ENCODE measurements at regions of chr11 and their contacts with region 1.

Region 1: GRCh38 chr11:47407746-47408590 is at the start of gene SLC39A13:
- DNase-seq: peak; percentile 88 to 94 (median 90)
- H3K4me3 ChIP-seq: peak within 1 kb of the TSS; percentile 34 to 73
- H3K4me3 Mint-ChIP-seq: peak within 1 kb of the TSS; percentile 89 to 97 (median 92)
- H3K27ac ChIP-seq: peak within 1 kb of the TSS; percentile 80
- H3K27ac Mint-ChIP-seq: peak within 1 kb of the TSS; percentile 92 to 97 (median 94)
- H3K4me1 ChIP-seq: peaks cover 25% of the 10 kb centered on the region
- H3K4me1 Mint-ChIP-seq: peaks cover 10 to 27% (median 20%) of the 10 kb centered on the region in 4 donors
- H3K27me3 ChIP-seq: no peaks in the 10 kb centered on the region
- H3K27me3 Mint-ChIP-seq: no peaks in the 10 kb centered on the region
- total RNA-seq, gene SLC39A13: 63.6 to 68.3 TPM

Region 2: DNA sequence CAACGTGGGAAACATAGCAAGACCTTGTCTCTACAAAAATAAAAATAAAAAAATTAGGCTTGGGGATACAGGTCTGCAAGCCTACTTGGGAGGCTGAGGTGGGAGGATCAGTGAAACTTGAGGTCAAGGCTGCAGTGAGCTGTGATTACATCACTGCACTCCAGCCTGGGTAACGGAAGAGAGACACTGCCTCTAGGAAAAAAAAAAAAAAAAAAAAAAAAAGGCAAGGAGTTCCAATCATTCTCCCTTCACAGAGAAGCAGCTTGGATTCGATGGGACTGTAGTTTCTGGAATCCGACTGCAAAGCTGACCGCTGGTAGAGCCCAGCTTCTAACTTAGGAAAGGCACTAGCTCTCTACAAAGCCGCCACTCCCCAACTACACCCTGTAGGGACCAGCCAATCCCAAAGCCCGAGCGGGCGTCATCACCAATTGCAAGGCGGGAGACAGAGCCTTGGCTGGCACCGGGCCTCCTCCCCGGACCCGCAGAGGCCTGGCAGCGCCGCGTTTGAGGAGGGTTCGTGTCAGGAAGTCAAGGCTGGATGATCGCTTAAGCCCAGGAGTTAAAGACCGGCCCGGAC is 193.9 kb before region 1 on chr11:
- CTCF ChIA-PET with region 1: no interaction called
- POLR2A ChIA-PET with region 1: interaction called, 6 read pairs
- intact Hi-C with region 1: loop called (anchors 1 kb)
- DNase-seq: peak; percentile 79 to 88 (median 80)
- H3K4me3 ChIP-seq: peak overlapping the region; percentile 57 to 95
- H3K4me3 Mint-ChIP-seq: peak overlapping the region; percentile 99 to 100 (median 99)
- H3K27ac ChIP-seq: peak overlapping the region; percentile 81
- H3K27ac Mint-ChIP-seq: peak overlapping the region; percentile 98 to 100 (median 99)
- H3K4me1 ChIP-seq: peaks cover 37% of the 10 kb centered on the region
- H3K4me1 Mint-ChIP-seq: peaks cover 23 to 39% (median 28%) of the 10 kb centered on the region in 4 donors
- H3K27me3 ChIP-seq: no peaks in the 10 kb centered on the region
- H3K27me3 Mint-ChIP-seq: no peaks in the 10 kb centered on the region

Region 3: GRCh38 chr11:47317064-47317828 is 90.7 kb before region 1 on chr11:
- CTCF ChIA-PET with region 1: interaction called, 12 read pairs
- POLR2A ChIA-PET with region 1: no interaction called
- intact Hi-C with region 1: no loop called
- DNase-seq: no peak
- H3K4me3 ChIP-seq: no peak overlapping the region
- H3K4me3 Mint-ChIP-seq: no peak overlapping the region
- H3K27ac ChIP-seq: no peak overlapping the region
- H3K27ac Mint-ChIP-seq: peak overlapping the region in 5 of 7 donors; percentile 12 to 82 (median 24)
- H3K4me1 ChIP-seq: no peaks in the 10 kb centered on the region
- H3K4me1 Mint-ChIP-seq: peaks cover 0 to 4% (median 0%) of the 10 kb centered on the region in 4 donors
- H3K27me3 ChIP-seq: no peaks in the 10 kb centered on the region
- H3K27me3 Mint-ChIP-seq: no peaks in the 10 kb centered on the region

Region 4: DNA sequence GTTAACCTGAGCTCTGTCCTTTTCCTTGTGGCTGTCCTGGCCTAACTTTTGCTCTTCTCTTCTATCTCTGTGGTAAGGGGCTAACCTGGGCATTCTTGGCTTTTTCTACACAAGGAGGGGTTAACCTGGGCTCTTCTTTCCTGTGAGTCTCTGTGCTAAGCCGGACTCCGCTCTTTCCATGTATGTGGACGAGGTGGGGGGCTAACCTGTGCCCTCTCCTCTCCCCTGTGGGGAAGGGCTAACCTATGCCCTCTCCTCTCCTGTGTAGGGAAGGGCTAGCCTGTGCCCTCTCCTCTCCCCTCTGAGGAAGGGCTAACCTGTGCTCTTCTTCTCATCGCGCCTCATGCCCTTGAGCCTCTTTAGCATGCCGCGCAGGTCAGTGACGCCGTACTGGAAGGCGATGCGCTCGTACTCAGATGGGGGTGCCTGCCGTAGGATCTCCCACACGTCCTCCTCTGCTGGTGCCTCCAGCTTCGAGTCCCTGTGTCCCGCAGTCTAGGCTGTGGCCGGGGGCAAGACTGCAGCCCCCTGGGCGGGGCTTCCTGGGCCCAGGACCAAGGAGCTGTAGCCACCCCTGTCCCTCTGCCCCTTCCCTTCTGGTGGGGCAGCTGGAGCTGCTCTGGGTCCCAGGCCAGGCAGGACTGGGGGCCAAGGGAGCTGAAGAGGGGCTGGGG is 61.9 kb before region 1 on chr11:
- CTCF ChIA-PET with region 1: no interaction called
- POLR2A ChIA-PET with region 1: no interaction called
- intact Hi-C with region 1: no loop called
- DNase-seq: no peak
- H3K4me3 ChIP-seq: no peak overlapping the region
- H3K4me3 Mint-ChIP-seq: no peak overlapping the region
- H3K27ac ChIP-seq: no peak overlapping the region
- H3K27ac Mint-ChIP-seq: no peak overlapping the region
- H3K4me1 ChIP-seq: no peaks in the 10 kb centered on the region
- H3K4me1 Mint-ChIP-seq: peaks cover 0 to 2% (median 0%) of the 10 kb centered on the region in 4 donors
- H3K27me3 ChIP-seq: no peaks in the 10 kb centered on the region
- H3K27me3 Mint-ChIP-seq: no peaks in the 10 kb centered on the region

Region 5: DNA sequence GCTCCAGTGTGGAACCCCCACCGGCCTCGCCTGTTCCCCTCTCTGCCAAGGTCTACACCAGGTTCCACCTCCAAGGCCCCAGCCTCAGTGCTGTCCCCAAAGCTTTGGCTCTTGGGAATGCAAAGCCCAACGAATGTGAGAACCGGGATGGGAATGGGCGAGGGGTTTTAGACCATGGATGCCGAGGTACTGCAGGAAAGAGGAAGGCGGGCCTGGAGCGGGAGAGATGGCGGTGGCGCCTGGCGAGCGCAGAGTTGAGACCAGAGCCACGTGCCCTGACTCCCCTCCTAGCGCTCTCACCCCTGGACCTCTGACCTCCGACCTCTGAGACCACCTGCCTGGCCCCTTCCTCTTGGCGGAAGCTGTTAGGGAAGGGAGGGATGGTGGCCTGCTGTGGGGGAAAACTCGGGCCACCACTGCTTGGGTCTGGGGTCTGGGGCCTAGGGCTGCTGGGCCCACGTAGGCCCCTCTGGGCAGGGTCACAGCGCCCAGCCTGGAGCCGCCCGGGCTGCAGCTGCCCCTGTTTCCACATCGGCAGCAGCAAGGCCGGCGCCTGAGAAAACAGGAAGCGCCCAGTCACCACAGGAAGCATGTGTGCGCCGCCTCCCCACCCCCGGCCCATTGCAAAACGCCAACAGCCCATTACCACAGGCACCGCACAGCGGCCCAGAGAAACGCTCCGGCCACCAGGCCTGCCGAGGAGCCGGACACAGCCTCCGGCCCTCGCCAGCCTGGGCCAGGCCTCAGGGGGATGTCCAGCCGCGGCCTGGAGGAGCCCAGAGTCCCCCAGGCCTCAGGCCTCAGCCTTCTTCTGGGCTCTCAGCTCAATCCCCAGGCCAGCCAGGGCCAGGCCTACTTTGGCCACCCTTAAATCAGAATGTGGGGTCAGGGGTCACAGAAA is 13.4 kb before region 1 on chr11:
- CTCF ChIA-PET with region 1: interaction called, 70 read pairs
- POLR2A ChIA-PET with region 1: interaction called, 86 read pairs
- intact Hi-C with region 1: loop called (anchors 1 kb)
- DNase-seq: peak; percentile 36 to 61 (median 42)
- H3K4me3 ChIP-seq: peak overlapping the region; percentile 47 to 69
- H3K4me3 Mint-ChIP-seq: peak overlapping the region; percentile 50 to 76 (median 68)
- H3K27ac ChIP-seq: peak overlapping the region; percentile 77
- H3K27ac Mint-ChIP-seq: peak overlapping the region; percentile 73 to 91 (median 89)
- H3K4me1 ChIP-seq: peaks cover 58% of the 10 kb centered on the region
- H3K4me1 Mint-ChIP-seq: peaks cover 17 to 70% (median 42%) of the 10 kb centered on the region in 4 donors
- H3K27me3 ChIP-seq: no peaks in the 10 kb centered on the region
- H3K27me3 Mint-ChIP-seq: no peaks in the 10 kb centered on the region

Region 6: GRCh38 chr11:47454180-47454644 is 46.2 kb after region 1 on chr11:
- CTCF ChIA-PET with region 1: interaction called, 10 read pairs
- POLR2A ChIA-PET with region 1: no interaction called
- intact Hi-C with region 1: loop called (anchors 1 kb)
- DNase-seq: peak; percentile 63 to 72 (median 68)
- H3K4me3 ChIP-seq: no peak overlapping the region
- H3K4me3 Mint-ChIP-seq: peak overlapping the region in 2 of 8 donors; percentile 39 to 44
- H3K27ac ChIP-seq: no peak overlapping the region
- H3K27ac Mint-ChIP-seq: peak overlapping the region in 3 of 7 donors; percentile 27 to 36 (median 28)
- H3K4me1 ChIP-seq: peaks cover 10% of the 10 kb centered on the region
- H3K4me1 Mint-ChIP-seq: peaks cover 0 to 9% (median 5%) of the 10 kb centered on the region in 4 donors
- H3K27me3 ChIP-seq: no peaks in the 10 kb centered on the region
- H3K27me3 Mint-ChIP-seq: no peaks in the 10 kb centered on the region

Region 7: DNA sequence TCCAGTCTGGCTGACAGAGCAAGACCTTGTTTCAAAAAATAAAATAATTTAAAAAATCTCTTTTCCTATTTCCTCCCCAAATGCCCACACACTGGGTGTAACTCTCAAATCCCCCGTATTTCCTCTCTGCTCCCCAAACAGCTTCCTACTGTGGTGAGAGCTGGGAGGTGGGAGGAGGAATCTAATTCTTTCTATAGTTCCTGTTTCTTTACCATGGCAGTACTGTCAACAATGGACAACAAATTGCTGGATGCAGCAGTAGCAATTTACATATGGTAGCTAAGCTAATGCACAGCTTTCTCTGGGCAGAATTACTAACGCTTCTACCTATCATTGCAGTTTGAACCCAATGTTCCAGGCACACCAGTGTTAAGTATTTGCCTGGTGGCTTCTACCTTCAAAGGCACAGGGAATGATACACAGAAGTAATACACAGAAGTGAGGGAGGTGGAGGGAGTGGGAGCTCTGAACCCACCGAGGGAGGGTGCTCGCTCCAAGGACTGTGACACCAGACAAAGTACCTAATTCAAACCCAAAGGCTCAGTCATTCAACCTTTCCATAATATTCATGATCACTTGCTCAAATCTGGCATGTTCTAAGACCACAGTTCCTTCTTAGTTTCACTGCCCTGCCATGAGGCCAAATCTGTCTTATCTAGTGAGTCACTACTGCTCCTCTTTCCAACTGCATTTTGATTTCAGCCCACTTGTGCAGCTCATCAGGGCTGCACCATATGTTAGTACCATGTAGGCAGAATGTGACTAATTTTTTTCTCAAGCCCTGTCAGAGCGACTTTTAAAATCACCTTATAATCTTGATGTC is 107.1 kb after region 1 on chr11:
- CTCF ChIA-PET with region 1: no interaction called
- POLR2A ChIA-PET with region 1: no interaction called
- intact Hi-C with region 1: no loop called
- DNase-seq: no peak
- H3K4me3 ChIP-seq: no peak overlapping the region
- H3K4me3 Mint-ChIP-seq: peak overlapping the region in 7 of 8 donors; percentile 35 to 83 (median 71)
- H3K27ac ChIP-seq: no peak overlapping the region
- H3K27ac Mint-ChIP-seq: peak overlapping the region; percentile 44 to 96 (median 77)
- H3K4me1 ChIP-seq: peaks cover 91% of the 10 kb centered on the region
- H3K4me1 Mint-ChIP-seq: peaks cover 51 to 91% (median 71%) of the 10 kb centered on the region in 4 donors
- H3K27me3 ChIP-seq: no peaks in the 10 kb centered on the region
- H3K27me3 Mint-ChIP-seq: no peaks in the 10 kb centered on the region

Region 8: DNA sequence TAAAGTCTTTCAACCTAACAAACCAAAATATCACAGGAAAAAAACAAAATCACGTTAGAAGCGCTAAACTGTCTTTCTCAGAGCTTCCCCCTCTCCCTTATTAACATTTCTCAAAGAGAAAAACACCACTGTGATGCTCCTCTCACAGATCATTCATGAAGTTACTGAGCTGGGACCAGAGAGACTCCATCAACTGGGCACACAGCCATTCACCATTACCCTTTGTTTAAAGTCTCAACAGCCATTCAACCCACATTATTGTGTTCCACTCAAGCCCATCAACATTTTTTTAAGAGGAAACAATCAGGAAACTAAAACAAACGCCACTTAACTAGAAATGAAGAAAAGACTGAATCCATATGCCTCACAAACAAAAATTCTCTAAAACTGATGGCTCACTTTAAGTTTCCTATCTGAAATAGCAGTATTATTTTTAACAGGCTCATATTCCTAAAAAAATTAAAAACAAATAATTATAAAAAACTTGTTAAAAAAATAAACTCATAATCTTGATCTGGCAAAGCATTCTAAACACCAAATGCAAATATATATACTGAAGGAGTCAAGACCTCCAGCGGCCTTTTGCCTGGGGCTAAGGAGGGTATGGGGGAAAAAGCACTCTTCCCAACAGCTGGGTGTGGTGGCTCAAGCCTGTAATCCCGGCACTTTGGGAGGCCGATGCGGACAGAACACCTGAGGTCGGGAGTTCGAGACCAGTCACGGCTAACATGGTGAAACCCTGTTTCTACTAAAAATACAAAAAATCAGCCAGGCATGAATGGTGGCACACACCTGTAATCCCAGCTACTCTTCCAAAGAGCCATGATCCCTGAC is 131.0 kb after region 1 on chr11:
- CTCF ChIA-PET with region 1: no interaction called
- POLR2A ChIA-PET with region 1: no interaction called
- intact Hi-C with region 1: no loop called
- DNase-seq: no peak
- H3K4me3 ChIP-seq: no peak overlapping the region
- H3K4me3 Mint-ChIP-seq: peak overlapping the region in 5 of 8 donors; percentile 13 to 77 (median 55)
- H3K27ac ChIP-seq: no peak overlapping the region
- H3K27ac Mint-ChIP-seq: peak overlapping the region in 6 of 7 donors; percentile 30 to 90 (median 56)
- H3K4me1 ChIP-seq: peaks cover 75% of the 10 kb centered on the region
- H3K4me1 Mint-ChIP-seq: peaks cover 43 to 80% (median 63%) of the 10 kb centered on the region in 4 donors
- H3K27me3 ChIP-seq: no peaks in the 10 kb centered on the region
- H3K27me3 Mint-ChIP-seq: no peaks in the 10 kb centered on the region